ENCODE measurements at regions of chr9 and their contacts with region 1.

Region 1: GRCh38 chr9:123338710-123339665 is 17.0 kb upstream of the CRB2 start:
- DNase-seq: peak; percentile 69 to 89 (median 74)
- ATAC-seq: peak; percentile 84
- H3K4me3 ChIP-seq: peak overlapping the region; percentile 26
- H3K27ac ChIP-seq: peak overlapping the region; percentile 89
- H3K4me1 ChIP-seq: peaks cover 50 to 57% of the 10 kb centered on the region in 2 experiments
- H3K27me3 ChIP-seq: no peaks in the 10 kb centered on the region
- CTCF ChIP-seq: no peak
- EP300 ChIP-seq: peak; percentile 63; the same call in 1 of the 2 replicates
- POLR2A ChIP-seq: peak; percentile 75
- RAD21 ChIP-seq: no peak; a peak in 1 of 4 replicates

Region 2: DNA sequence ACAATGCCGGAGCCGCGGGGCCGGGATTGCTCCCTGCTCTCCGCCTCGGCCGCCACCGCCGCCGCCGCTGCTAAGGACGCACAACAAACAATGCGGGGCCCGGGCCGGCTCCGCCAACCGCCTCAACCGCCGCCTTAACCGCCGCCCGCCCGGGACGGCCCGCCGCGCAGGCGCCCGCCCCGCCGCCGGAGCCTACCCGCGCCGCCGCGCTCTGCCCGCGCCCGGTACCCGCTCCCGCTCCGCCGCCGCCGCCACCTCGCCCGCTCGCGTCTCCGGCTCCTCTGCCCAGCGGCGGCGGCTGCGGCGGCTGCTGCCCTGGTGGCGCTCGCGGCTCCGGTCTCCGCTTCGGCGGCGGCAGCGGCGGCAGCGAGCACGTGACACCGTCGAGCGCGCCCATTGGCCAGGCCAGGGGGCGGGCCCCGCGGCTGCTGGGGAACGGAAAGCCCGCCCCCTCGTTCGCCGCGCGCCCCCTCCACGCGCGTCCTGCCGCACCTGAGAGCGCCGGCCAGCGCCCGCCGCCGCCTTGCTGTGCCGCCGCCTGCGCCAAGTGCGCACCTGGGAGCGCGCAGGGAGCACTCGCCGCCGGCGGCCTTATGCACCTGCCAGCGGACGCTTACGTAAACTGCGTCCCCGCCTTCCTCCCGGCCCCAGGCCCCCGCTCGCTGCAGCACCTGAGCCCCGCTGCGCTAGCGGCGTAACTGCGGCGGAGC is 70.6 kb before region 1 on chr9 and contains the start of gene STRBP:
- CTCF ChIA-PET with region 1: no interaction called
- POLR2A ChIA-PET with region 1: interaction called, 5 read pairs
- in situ Hi-C with region 1: no loop called
- intact Hi-C with region 1: loop called (anchors 2 kb)
- DNase-seq: peak; percentile 92 to 99 (median 98)
- ATAC-seq: peak; percentile 92
- H3K4me3 ChIP-seq: peak within 1 kb of the TSS; percentile 85
- H3K27ac ChIP-seq: peak within 1 kb of the TSS; percentile 79
- H3K4me1 ChIP-seq: peaks cover 24% of the 10 kb centered on the region in 2 experiments; a peak in 4 of 5 replicates
- H3K27me3 ChIP-seq: no peaks in the 10 kb centered on the region
- CTCF ChIP-seq: peak in 1 of 3 experiments; percentile 4; a peak in 1 of 6 replicates
- EP300 ChIP-seq: no peak
- POLR2A ChIP-seq: no peak
- RAD21 ChIP-seq: peak in 1 of 2 experiments; percentile 17; a peak in 1 of 4 replicates
- polyA plus RNA-seq, gene STRBP: 27.7 to 27.8 TPM

Region 3: GRCh38 chr9:123305879-123306278 is 33.1 kb before region 1 on chr9:
- CTCF ChIA-PET with region 1: no interaction called
- POLR2A ChIA-PET with region 1: interaction called, 3 read pairs
- in situ Hi-C with region 1: no loop called
- intact Hi-C with region 1: loop called (anchors 1 kb)
- DNase-seq: peak in 1 of 4 experiments; percentile 8
- ATAC-seq: no peak
- H3K4me3 ChIP-seq: no peak overlapping the region
- H3K27ac ChIP-seq: peak overlapping the region; percentile 86
- H3K4me1 ChIP-seq: peaks cover 57 to 66% of the 10 kb centered on the region in 2 experiments
- H3K27me3 ChIP-seq: no peaks in the 10 kb centered on the region
- CTCF ChIP-seq: no peak
- EP300 ChIP-seq: no peak
- POLR2A ChIP-seq: no peak
- RAD21 ChIP-seq: no peak

Region 4: GRCh38 chr9:123326662-123327093 is 12.3 kb before region 1 on chr9:
- CTCF ChIA-PET with region 1: no interaction called
- POLR2A ChIA-PET with region 1: interaction called, 12 read pairs
- in situ Hi-C with region 1: no loop called
- intact Hi-C with region 1: no loop called
- DNase-seq: peak; percentile 40 to 74 (median 50)
- ATAC-seq: peak; percentile 81
- H3K4me3 ChIP-seq: no peak overlapping the region
- H3K27ac ChIP-seq: peak overlapping the region; percentile 41; the same call in 2 of the 3 replicates
- H3K4me1 ChIP-seq: peaks cover 27 to 28% of the 10 kb centered on the region in 2 experiments
- H3K27me3 ChIP-seq: no peaks in the 10 kb centered on the region
- CTCF ChIP-seq: no peak
- EP300 ChIP-seq: 0 out of 2 replicates have a peak, but pooled peaks have one; percentile 13
- POLR2A ChIP-seq: no peak
- RAD21 ChIP-seq: no peak

Region 5: GRCh38 chr9:123453831-123454321 is 114.9 kb after region 1 on chr9:
- CTCF ChIA-PET with region 1: no interaction called
- POLR2A ChIA-PET with region 1: no interaction called
- in situ Hi-C with region 1: no loop called
- intact Hi-C with region 1: no loop called
- DNase-seq: no peak
- ATAC-seq: no peak
- H3K4me3 ChIP-seq: no peak overlapping the region
- H3K27ac ChIP-seq: no peak overlapping the region
- H3K4me1 ChIP-seq: no peaks in the 10 kb centered on the region; a peak in 1 of 5 replicates
- H3K27me3 ChIP-seq: no peaks in the 10 kb centered on the region
- CTCF ChIP-seq: no peak
- EP300 ChIP-seq: no peak
- POLR2A ChIP-seq: no peak
- RAD21 ChIP-seq: no peak

Measured in K562 (cell line).